Panc1 (cell line): ENCODE measurements at regions of chrX and their contacts with region 1.

Region 1: DNA sequence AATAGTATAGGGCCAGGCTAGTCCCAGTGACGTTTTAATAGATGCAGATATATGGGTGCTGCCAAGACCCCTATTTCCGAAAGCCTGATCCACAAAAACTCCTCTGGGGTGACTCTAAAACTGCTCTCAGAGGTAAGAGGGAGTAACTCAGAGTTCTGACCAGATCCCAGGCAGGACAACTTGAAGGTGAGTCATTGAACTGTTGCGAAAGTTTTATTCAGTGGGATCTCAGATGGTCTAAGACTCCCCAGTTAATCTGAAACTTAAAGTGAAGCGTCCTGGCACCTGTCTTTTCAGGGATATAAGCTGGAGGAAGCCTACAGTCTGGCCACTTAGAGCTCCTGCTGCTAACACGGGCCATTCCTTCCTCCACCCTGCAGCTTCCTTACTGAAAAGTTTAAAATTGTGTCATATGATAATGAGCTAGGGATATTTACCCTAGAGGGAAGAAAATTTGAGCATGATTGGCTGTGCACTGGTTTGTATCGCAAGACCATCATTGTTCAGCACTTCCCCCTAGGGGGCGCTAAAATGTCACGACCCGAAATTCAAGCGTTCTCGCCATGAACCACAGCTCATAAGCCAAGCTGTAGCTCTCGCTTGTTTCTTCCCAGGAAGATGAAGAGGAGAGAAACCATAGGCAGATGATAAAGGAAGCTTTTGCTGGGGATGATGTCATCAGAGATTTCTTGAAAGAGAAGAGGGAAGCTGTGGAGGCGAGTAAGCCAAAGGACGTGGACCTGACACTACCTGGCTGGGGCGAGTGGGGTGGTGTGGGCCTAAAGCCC is 19.5 kb downstream of the UTP14A start:
- DNase-seq: peak; percentile 55
- ATAC-seq: peak; percentile 85
- H3K4me3 ChIP-seq: no peak overlapping the region
- H3K27ac ChIP-seq: no peak overlapping the region
- H3K4me1 ChIP-seq: no peaks in the 10 kb centered on the region; the same call in 1 of the 2 replicates
- H3K27me3 ChIP-seq: no peaks in the 10 kb centered on the region
- CTCF ChIP-seq: peak; percentile 85

Region 2: DNA sequence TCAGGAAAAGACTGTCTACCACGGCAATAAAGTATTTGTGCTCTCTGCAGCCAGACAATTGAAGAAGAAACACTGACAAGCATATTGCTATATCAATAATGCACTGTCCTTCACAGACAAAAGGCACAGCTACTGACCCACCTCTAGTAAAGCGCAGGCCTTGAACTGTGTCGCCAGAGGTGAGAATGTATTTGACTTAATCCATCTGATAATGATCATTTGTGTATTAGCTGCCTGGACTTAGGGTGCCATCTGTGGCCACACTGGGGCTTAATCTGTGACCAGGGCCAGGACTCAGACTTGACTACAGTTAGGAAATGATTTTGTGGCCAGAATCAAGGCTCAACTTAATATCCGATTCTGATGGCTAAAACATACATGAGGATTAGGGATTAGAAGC is 662.6 kb before region 1 on chrX:
- CTCF ChIA-PET with region 1: no interaction called
- POLR2A ChIA-PET with region 1: no interaction called
- in situ Hi-C with region 1: no loop called
- intact Hi-C with region 1: no loop called
- DNase-seq: no peak
- ATAC-seq: no peak
- H3K4me3 ChIP-seq: no peak overlapping the region
- H3K27ac ChIP-seq: no peak overlapping the region
- H3K4me1 ChIP-seq: no peaks in the 10 kb centered on the region
- H3K27me3 ChIP-seq: no peaks in the 10 kb centered on the region
- CTCF ChIP-seq: no peak

Region 3: DNA sequence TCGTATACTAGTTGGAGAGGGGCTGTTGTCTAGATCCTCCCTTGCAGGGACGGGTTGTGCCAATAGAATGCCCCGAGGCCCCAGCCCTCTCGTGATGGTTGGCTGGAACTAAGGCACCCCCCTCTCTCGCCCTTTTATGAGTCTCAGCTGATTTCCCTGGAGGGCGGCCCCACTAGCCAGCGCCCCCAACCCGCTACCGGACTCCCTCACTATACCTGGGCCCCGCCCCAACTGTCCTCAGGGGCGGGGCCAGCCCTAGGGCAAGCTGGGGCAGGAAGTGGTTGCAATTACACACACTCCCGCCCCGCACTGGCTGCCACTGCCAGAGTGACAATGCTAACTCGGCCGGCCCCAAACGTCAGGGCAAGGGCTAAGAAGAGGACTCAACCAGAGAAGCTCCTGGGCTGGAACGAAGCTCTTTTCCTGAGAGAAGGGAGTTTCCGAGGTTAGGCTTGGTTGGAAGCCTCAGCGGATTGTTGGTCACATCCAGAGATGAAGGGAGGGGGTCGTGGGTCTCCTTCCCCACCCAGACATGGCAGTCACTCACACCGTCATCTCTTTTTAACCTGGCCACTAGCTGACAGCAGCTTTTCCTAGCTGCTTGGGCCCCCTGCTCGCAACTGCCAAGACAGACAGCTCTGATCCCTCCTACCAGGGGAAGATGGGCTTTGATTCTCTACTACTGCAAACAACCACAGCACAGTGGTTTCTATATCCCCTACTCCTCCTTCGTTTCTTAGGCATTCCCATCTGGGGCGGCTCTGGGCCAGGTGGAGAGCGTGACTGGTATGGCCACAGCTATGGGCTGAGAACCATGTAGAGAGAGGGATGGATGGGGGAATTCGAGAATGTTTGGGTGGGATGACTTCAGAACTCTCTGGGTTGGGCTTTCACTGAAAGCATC is 35.9 kb after region 1 on chrX:
- CTCF ChIA-PET with region 1: no interaction called
- POLR2A ChIA-PET with region 1: interaction called, 10 read pairs
- in situ Hi-C with region 1: no loop called
- intact Hi-C with region 1: no loop called
- DNase-seq: no peak
- ATAC-seq: peak; percentile 85
- H3K4me3 ChIP-seq: peak overlapping the region; percentile 27 to 62
- H3K27ac ChIP-seq: peak overlapping the region; percentile 89
- H3K4me1 ChIP-seq: peaks cover 38% of the 10 kb centered on the region
- H3K27me3 ChIP-seq: no peaks in the 10 kb centered on the region
- CTCF ChIP-seq: no peak

Region 4: DNA sequence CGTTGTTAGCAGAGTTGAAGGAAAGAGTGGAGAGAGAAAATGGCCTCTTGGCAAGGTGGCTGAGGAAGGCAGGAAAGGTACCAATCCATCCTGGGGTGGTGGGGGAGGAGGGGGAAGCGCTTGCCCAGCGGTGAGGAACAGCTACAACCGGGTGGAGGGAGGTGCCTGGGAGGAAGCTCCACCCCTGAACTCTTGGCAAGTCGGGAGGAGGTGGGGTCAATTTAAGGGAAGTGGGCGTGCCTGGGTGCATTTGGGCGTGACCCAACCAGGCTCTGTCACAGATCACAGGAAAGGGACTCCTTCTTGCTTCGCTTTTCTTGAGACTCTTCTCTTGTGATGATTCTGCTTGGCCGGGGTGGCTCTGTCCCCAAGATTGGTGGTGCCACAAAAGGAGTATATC is 98.6 kb after region 1 on chrX:
- CTCF ChIA-PET with region 1: interaction called, 5 read pairs
- POLR2A ChIA-PET with region 1: no interaction called
- in situ Hi-C with region 1: no loop called
- intact Hi-C with region 1: loop called (anchors 10 kb)
- DNase-seq: no peak
- ATAC-seq: peak; percentile 67
- H3K4me3 ChIP-seq: no peak overlapping the region
- H3K27ac ChIP-seq: no peak overlapping the region
- H3K4me1 ChIP-seq: no peaks in the 10 kb centered on the region
- H3K27me3 ChIP-seq: no peaks in the 10 kb centered on the region
- CTCF ChIP-seq: no peak

Region 5: GRCh38 chrX:130039847-130040246 is 114.3 kb after region 1 on chrX:
- CTCF ChIA-PET with region 1: interaction called, 10 read pairs
- POLR2A ChIA-PET with region 1: no interaction called
- in situ Hi-C with region 1: no loop called
- intact Hi-C with region 1: no loop called
- DNase-seq: no peak
- ATAC-seq: no peak
- H3K4me3 ChIP-seq: no peak overlapping the region
- H3K27ac ChIP-seq: no peak overlapping the region
- H3K4me1 ChIP-seq: no peaks in the 10 kb centered on the region
- H3K27me3 ChIP-seq: no peaks in the 10 kb centered on the region
- CTCF ChIP-seq: no peak

Region 6: GRCh38 chrX:130060122-130061069 is 134.9 kb after region 1 on chrX:
- CTCF ChIA-PET with region 1: interaction called, 14 read pairs
- POLR2A ChIA-PET with region 1: no interaction called
- in situ Hi-C with region 1: no loop called
- intact Hi-C with region 1: loop called (anchors 5 kb)
- DNase-seq: peak; percentile 45
- ATAC-seq: peak; percentile 93
- H3K4me3 ChIP-seq: peak overlapping the region; percentile 47 to 59
- H3K27ac ChIP-seq: peak overlapping the region; percentile 79
- H3K4me1 ChIP-seq: peaks cover 4% of the 10 kb centered on the region; the same call in 1 of the 2 replicates
- H3K27me3 ChIP-seq: no peaks in the 10 kb centered on the region
- CTCF ChIP-seq: no peak